Pancreas (tissue), 10 donors: ENCODE measurements at regions of chr18 and their contacts with region 1.

Region 1: GRCh38 chr18:12659904-12660605 is 2.1 kb upstream of the SPIRE1 start:
- DNase-seq: peak in 2 of 6 donors; percentile 29 to 66
- ATAC-seq: peak; percentile 42 to 71 (median 66)
- H3K4me3 ChIP-seq: no peak overlapping the region
- H3K27ac ChIP-seq: peak overlapping the region in 2 of 4 donors; percentile 43 to 44
- H3K4me1 ChIP-seq: peaks cover 0 to 12% (median 5%) of the 10 kb centered on the region in 3 donors
- H3K27me3 ChIP-seq: no peaks in the 10 kb centered on the region
- CTCF ChIP-seq: peak; percentile 64 to 84 (median 78)

Region 2: GRCh38 chr18:12391618-12392165 is 268.4 kb before region 1 on chr18:
- intact Hi-C with region 1: loop called in 2 of 3 experiments (anchors 5 kb)
- DNase-seq: peak in 4 of 6 donors; percentile 33 to 65 (median 42)
- ATAC-seq: peak; percentile 85 to 99 (median 98)
- H3K4me3 ChIP-seq: no peak overlapping the region
- H3K27ac ChIP-seq: no peak overlapping the region
- H3K4me1 ChIP-seq: no peaks in the 10 kb centered on the region
- H3K27me3 ChIP-seq: no peaks in the 10 kb centered on the region
- CTCF ChIP-seq: peak; percentile 42 to 88 (median 83)